IMR-90 (cell line): ENCODE measurements at regions of chr13 and their contacts with region 1.

Region 1: GRCh38 chr13:107867701-107868661 is 347.4 kb downstream of the LIG4 start:
- DNase-seq: peak; percentile 57
- ATAC-seq: peak; percentile 63
- H3K4me3 ChIP-seq: peak overlapping the region; percentile 92
- H3K27ac ChIP-seq: peak overlapping the region; percentile 82
- H3K4me1 ChIP-seq: no peaks in the 10 kb centered on the region
- H3K27me3 ChIP-seq: no peaks in the 10 kb centered on the region
- CTCF ChIP-seq: peak; percentile 76
- POLR2A ChIP-seq: no peak
- RAD21 ChIP-seq: peak; percentile 89

Region 2: DNA sequence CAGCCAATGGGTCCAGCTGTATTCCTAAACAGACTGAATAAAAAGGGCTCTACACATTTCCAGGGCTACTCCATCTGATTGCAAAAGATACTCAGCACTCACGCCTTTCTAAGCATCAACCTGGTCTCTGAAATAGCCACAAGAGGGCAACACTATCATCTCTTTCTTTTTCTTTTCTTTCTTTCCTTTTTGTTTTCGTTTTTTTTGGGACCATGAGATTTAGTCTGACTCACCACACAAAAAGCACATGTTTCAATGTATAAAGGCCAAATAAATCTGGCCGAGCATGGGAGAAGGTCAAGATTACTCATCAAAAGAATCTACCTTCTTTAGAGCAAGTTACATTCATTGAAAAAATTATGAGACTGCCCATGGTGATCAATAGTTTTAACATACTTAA is 494.4 kb before region 1 on chr13:
- CTCF ChIA-PET with region 1: interaction called, 3 read pairs
- POLR2A ChIA-PET with region 1: interaction called, 3 read pairs
- dilution Hi-C with region 1: no loop called
- in situ Hi-C with region 1: loop called (anchors 5 kb)
- intact Hi-C with region 1: loop called (anchors 1 kb)
- DNase-seq: peak; percentile 91
- ATAC-seq: peak; percentile 50
- H3K4me3 ChIP-seq: no peak overlapping the region
- H3K27ac ChIP-seq: peak overlapping the region; percentile 73
- H3K4me1 ChIP-seq: peaks cover 18% of the 10 kb centered on the region
- H3K27me3 ChIP-seq: no peaks in the 10 kb centered on the region
- CTCF ChIP-seq: peak; percentile 84
- POLR2A ChIP-seq: no peak
- RAD21 ChIP-seq: peak; percentile 76

Region 3: DNA sequence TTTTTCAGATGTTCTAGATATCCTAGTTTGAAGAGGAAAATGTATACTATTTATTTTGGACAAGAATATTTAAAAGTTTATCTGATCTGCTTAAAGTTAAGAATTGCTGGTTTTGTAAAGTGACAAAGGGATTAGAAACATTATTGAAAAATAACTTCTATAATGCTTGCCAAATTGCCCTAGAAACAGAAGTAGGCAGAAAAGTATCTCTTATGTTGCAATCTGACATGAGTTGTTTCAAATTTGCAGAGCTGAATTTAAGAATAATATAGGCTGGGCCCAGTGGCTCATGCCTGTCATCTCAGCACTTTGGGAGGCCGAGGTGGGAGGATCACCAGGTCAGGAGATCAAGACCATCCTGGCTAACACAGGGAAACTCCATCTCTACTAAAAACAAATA is 429.7 kb before region 1 on chr13:
- CTCF ChIA-PET with region 1: no interaction called
- POLR2A ChIA-PET with region 1: no interaction called
- dilution Hi-C with region 1: no loop called
- in situ Hi-C with region 1: no loop called
- intact Hi-C with region 1: no loop called
- DNase-seq: no peak
- ATAC-seq: no peak
- H3K4me3 ChIP-seq: no peak overlapping the region
- H3K27ac ChIP-seq: no peak overlapping the region
- H3K4me1 ChIP-seq: peaks cover 4% of the 10 kb centered on the region; the same call in 1 of the 2 replicates
- H3K27me3 ChIP-seq: no peaks in the 10 kb centered on the region
- CTCF ChIP-seq: no peak
- POLR2A ChIP-seq: no peak
- RAD21 ChIP-seq: no peak

Region 4: GRCh38 chr13:107585469-107586180 is 282.4 kb before region 1 on chr13:
- CTCF ChIA-PET with region 1: no interaction called
- POLR2A ChIA-PET with region 1: no interaction called
- dilution Hi-C with region 1: no loop called
- in situ Hi-C with region 1: no loop called
- intact Hi-C with region 1: loop called (anchors 10 kb)
- DNase-seq: peak; percentile 46
- ATAC-seq: peak; percentile 30
- H3K4me3 ChIP-seq: no peak overlapping the region
- H3K27ac ChIP-seq: no peak overlapping the region
- H3K4me1 ChIP-seq: peaks cover 4% of the 10 kb centered on the region
- H3K27me3 ChIP-seq: no peaks in the 10 kb centered on the region
- CTCF ChIP-seq: no peak
- POLR2A ChIP-seq: no peak
- RAD21 ChIP-seq: no peak

Region 5: DNA sequence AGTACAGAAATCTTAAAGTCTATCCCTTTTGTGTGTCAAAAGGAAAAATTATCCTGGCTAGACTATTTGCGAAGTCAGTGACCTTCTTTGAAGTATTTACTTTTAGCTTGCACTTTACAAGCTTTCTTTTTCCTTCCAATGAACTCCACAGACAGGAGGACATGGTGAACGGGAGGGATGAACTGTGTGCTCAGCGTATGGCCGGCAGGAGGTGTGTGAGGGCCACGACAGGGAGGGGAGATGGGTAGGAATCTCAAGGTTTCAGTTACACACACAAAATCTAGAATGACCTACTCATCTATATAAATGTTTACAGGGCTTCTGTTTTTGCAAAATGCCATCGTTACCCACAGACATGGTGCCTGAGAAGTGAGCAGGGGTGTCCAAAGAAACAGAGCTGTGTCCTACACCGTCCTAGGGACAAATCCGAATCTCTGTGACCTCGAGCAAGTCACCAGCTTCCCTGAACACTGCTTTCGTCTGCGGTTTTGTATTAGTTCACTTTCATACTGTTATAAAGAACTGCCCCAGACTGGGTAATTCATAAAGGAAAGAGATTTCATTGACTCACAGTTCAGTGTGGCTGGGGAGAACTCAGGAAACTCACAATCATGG is 189.8 kb before region 1 on chr13:
- CTCF ChIA-PET with region 1: interaction called, 5 read pairs
- POLR2A ChIA-PET with region 1: no interaction called
- dilution Hi-C with region 1: no loop called
- in situ Hi-C with region 1: no loop called
- intact Hi-C with region 1: loop called (anchors 10 kb)
- DNase-seq: peak; percentile 53
- ATAC-seq: peak; percentile 85
- H3K4me3 ChIP-seq: no peak overlapping the region
- H3K27ac ChIP-seq: no peak overlapping the region
- H3K4me1 ChIP-seq: peaks cover 2% of the 10 kb centered on the region; the same call in 1 of the 2 replicates
- H3K27me3 ChIP-seq: no peaks in the 10 kb centered on the region
- CTCF ChIP-seq: peak; percentile 53
- POLR2A ChIP-seq: no peak
- RAD21 ChIP-seq: peak; percentile 67

Region 6: GRCh38 chr13:108086678-108087077 is 218.7 kb after region 1 on chr13:
- CTCF ChIA-PET with region 1: no interaction called
- POLR2A ChIA-PET with region 1: no interaction called
- dilution Hi-C with region 1: no loop called
- in situ Hi-C with region 1: no loop called
- intact Hi-C with region 1: loop called (anchors 5 kb)
- DNase-seq: peak; percentile 46
- ATAC-seq: peak; percentile 62
- H3K4me3 ChIP-seq: no peak overlapping the region
- H3K27ac ChIP-seq: no peak overlapping the region
- H3K4me1 ChIP-seq: no peaks in the 10 kb centered on the region
- H3K27me3 ChIP-seq: peaks cover 3% of the 10 kb centered on the region; the same call in 1 of the 2 replicates
- CTCF ChIP-seq: peak; percentile 32; the same call in 1 of the 2 replicates
- POLR2A ChIP-seq: no peak
- RAD21 ChIP-seq: peak; percentile 36